Heart left ventricle (tissue), 16 donors: ENCODE measurements at regions of chr16 and their contacts with region 1.

Region 1: DNA sequence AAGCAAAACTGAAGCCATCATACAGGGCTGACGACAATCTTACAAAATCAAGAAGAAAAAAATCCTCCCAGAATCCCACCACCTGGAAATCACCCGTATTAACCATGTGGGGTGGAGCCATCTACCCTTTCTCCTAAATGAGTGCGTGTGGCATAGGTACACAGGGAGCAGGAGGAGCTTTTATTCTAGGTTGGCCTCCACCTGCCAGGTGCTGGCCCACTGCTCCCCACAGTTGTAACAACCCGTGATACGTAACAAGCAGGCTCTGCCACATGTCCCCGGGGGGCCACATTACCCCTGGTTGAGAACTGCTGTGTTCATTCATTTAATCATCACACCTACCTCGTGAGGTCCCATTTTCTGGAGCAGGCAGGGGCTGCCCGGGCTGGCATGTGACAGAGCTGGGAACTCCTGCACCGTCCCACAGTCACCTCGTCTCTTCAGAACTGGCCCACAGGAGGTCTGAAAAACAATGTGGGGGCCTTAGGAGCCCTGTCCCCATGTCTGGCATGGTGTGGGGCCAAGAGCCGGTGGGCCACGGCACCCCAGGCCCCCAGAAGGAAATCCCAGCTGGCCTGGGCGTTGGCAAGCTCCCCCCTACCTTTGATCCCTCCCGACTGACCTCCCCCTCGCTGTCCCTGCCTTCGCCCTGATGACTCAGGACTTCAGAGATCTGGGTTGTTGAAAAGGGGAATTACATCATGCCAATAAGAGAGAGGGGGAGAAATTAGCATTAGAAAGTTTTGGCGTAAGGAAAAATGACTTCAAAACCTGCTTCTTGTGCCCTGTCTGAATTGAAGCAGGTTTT is 12.9 kb downstream of the CMIP start:
- DNase-seq: no peak
- ATAC-seq: peak in 2 of 4 donors; percentile 43 to 58
- H3K4me3 ChIP-seq: no peak overlapping the region
- H3K27ac ChIP-seq: peak overlapping the region in 1 of 12 donors; percentile 70
- H3K4me1 ChIP-seq: peaks cover 0 to 89% (median 27%) of the 10 kb centered on the region in 12 donors
- H3K27me3 ChIP-seq: no peaks in the 10 kb centered on the region
- CTCF ChIP-seq: no peak
- POLR2A ChIP-seq: no peak

Region 2: GRCh38 chr16:81500833-81501521 is 43.4 kb after region 1 on chr16:
- intact Hi-C with region 1: loop called in 1 of 10 experiments (anchors 5 kb)
- DNase-seq: peak in 1 of 5 donors; percentile 39
- ATAC-seq: peak in 1 of 4 donors; percentile 41
- H3K4me3 ChIP-seq: no peak overlapping the region
- H3K27ac ChIP-seq: peak overlapping the region in 6 of 12 donors; percentile 3 to 79 (median 32)
- H3K4me1 ChIP-seq: peaks cover 3 to 84% (median 21%) of the 10 kb centered on the region in 12 donors
- H3K27me3 ChIP-seq: no peaks in the 10 kb centered on the region
- CTCF ChIP-seq: no peak
- POLR2A ChIP-seq: no peak

Region 3: DNA sequence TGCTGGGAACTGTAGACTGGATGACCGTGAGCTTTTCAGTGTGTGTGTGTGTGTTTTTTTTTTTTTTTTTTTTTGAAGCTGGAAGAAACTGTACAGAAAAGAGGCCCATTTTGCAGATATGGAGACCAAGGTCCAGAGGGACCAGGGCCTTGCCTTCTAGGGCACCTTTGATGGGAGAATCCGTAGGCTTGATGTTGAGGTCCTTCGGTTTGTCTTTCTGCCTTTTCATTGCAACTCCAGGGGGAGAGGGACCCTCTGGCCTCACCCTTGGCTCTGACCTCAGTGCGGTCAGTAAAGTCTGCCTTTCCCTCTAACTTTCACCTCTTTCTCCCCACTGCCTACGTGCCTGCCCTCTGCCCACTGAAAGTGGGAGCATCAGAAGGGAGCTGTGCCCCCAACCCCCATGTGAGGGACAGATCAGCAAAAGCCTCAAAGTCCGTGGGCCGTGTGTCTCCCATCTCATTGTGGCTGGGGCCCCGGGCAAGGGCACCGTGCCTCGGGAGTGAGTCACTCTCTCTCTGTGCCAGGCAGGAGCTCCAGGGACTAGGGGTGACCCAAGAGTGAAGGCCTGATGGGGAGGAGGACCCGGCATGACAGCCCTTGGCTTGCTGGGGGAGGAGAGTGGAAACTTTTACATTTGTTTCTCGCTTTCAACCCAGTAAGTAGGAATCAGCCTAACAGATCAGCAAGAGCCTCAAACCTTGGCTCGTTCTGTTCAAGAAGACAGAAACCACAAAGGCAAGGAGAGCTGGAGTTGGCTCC is 110.6 kb after region 1 on chr16:
- intact Hi-C with region 1: no loop called
- DNase-seq: peak in 2 of 5 donors; percentile 68 to 73
- ATAC-seq: peak; percentile 43 to 94 (median 76)
- H3K4me3 ChIP-seq: no peak overlapping the region
- H3K27ac ChIP-seq: no peak overlapping the region
- H3K4me1 ChIP-seq: peaks cover 0 to 31% (median 7%) of the 10 kb centered on the region in 12 donors
- H3K27me3 ChIP-seq: no peaks in the 10 kb centered on the region
- CTCF ChIP-seq: no peak
- POLR2A ChIP-seq: no peak

Region 4: DNA sequence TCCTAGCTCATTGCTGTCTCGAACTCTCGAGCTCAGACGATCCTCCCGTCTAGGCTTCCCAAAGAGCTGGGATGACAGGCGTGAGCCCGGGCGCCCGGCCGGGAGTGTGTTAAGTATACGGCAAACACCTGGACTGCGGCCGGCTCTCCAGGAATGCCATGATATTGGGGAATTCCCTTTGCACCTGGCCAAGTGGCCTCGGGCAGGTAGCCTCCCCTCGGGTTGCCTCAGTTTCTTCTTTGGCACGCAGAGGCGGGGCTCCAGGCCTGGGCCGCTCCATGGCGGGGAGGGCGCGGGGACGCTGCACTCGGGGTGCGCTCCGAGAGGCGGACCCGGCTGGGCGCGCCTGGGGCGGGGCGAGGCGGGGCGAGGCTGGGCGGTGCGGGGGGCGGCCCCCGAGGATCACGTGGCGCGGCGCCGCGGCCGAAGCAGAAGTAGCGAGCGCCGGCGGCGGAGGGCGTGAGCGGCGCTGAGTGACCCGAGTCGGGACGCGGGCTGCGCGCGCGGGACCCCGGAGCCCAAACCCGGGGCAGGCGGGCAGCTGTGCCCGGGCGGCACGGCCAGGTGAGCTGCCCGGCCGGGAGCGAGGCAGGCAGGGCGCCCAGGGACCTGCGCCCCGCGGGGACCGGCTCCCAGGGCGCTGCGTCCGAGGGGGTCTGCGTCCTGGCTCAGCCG is 321.5 kb after region 1 on chr16 and contains the start of gene PLCG2:
- intact Hi-C with region 1: no loop called
- DNase-seq: peak; percentile 69 to 89 (median 80)
- ATAC-seq: peak; percentile 63 to 94 (median 91)
- H3K4me3 ChIP-seq: peak within 1 kb of the TSS; percentile 32 to 82 (median 70)
- H3K27ac ChIP-seq: peak within 1 kb of the TSS in 9 of 12 donors; percentile 33 to 84 (median 62)
- H3K4me1 ChIP-seq: peaks cover 0 to 35% (median 9%) of the 10 kb centered on the region in 12 donors
- H3K27me3 ChIP-seq: peaks cover 0 to 14% (median 2%) of the 10 kb centered on the region in 9 donors
- CTCF ChIP-seq: no peak
- POLR2A ChIP-seq: peak in 1 of 2 donors; percentile 58
- total RNA-seq, gene PLCG2: 3.7 to 35.4 (median 6.0) TPM